CD4-positive, alpha-beta memory T cell (primary cell): ENCODE measurements at regions of chr3 and their contacts with region 1.

Region 1: GRCh38 chr3:48446425-48447193 is at the start of gene ATRIP:
- DNase-seq: peak; percentile 79 to 86 (median 82)
- H3K4me3 ChIP-seq: peak within 1 kb of the TSS; percentile 76 to 84
- H3K4me3 Mint-ChIP-seq: peak within 1 kb of the TSS; percentile 83 to 96 (median 90)
- H3K27ac ChIP-seq: peak within 1 kb of the TSS; percentile 68
- H3K27ac Mint-ChIP-seq: peak within 1 kb of the TSS; percentile 91 to 97 (median 96)
- H3K4me1 ChIP-seq: peaks cover 30% of the 10 kb centered on the region
- H3K4me1 Mint-ChIP-seq: peaks cover 22 to 49% (median 37%) of the 10 kb centered on the region in 4 donors
- H3K27me3 ChIP-seq: no peaks in the 10 kb centered on the region
- H3K27me3 Mint-ChIP-seq: no peaks in the 10 kb centered on the region
- total RNA-seq, gene ATRIP: 14.9 to 15.2 TPM

Region 2: DNA sequence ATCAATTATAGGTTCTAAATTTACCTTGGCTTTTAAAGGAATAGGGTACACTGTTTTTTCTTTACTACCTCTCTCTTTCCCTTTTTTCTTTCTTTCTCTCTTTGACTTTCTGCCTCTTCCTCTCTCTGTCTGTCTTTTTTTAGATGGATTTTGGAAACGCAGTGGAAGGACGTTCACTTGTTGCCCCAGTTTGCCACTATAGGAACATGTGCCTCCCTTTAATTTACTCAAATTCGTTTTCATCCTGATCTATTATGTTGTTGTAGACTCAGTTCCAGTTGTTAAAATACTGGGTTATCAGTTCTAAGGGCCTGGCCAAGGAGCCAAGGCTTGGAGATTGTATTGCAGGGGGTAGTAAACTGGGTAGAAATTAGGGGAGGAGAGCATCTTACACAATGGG is 112.0 kb before region 1 on chr3:
- CTCF ChIA-PET with region 1: no interaction called
- POLR2A ChIA-PET with region 1: no interaction called
- intact Hi-C with region 1: no loop called
- DNase-seq: no peak
- H3K4me3 ChIP-seq: no peak overlapping the region
- H3K4me3 Mint-ChIP-seq: no peak overlapping the region
- H3K27ac ChIP-seq: no peak overlapping the region
- H3K27ac Mint-ChIP-seq: no peak overlapping the region
- H3K4me1 ChIP-seq: no peaks in the 10 kb centered on the region
- H3K4me1 Mint-ChIP-seq: peaks cover 0 to 2% (median 0%) of the 10 kb centered on the region in 4 donors
- H3K27me3 ChIP-seq: no peaks in the 10 kb centered on the region
- H3K27me3 Mint-ChIP-seq: peaks cover 22 to 37% of the 10 kb centered on the region in 2 donors

Region 3: GRCh38 chr3:48459773-48460516 is 13.3 kb after region 1 on chr3:
- CTCF ChIA-PET with region 1: interaction called, 3 read pairs
- POLR2A ChIA-PET with region 1: interaction called, 51 read pairs
- intact Hi-C with region 1: no loop called
- DNase-seq: no peak
- H3K4me3 ChIP-seq: no peak overlapping the region
- H3K4me3 Mint-ChIP-seq: no peak overlapping the region
- H3K27ac ChIP-seq: no peak overlapping the region
- H3K27ac Mint-ChIP-seq: peak overlapping the region in 1 of 7 donors; percentile 60
- H3K4me1 ChIP-seq: no peaks in the 10 kb centered on the region
- H3K4me1 Mint-ChIP-seq: peaks cover 0 to 10% (median 6%) of the 10 kb centered on the region in 4 donors
- H3K27me3 ChIP-seq: no peaks in the 10 kb centered on the region
- H3K27me3 Mint-ChIP-seq: no peaks in the 10 kb centered on the region

Region 4: DNA sequence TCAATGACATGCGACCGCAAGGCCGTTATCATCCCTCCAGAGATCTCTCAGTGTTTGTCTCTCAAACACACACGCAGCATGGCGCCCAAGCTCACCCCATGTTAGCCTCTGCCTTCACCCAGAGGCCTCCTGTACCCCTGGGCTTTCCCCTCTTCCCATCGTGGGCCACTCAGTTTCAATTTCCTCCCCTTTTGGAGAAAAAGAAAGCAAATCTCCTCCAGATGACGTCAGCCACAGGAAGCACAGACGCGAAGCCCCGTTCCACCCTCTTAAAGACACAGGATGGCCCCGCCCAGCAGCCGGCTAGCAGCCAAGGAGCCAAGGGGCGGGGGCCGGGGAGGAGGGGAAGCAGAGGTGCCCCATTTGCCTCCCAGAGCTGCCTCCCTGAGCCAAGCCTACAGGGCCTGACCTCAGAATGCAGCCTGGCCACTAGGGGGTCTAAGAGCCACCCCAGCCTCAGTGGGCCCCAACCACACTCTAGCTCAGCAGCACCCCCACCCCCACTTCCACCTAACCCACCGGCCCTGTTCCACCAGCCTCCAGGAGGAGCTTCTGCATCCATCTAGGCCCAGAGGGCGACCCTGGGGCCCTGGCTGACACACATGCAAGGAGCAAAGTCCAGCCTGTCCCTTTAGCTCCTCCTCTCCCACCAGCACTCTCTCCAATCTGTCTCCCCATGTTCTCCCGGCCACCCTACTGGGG is 26.5 kb after region 1 on chr3:
- CTCF ChIA-PET with region 1: interaction called, 4 read pairs
- POLR2A ChIA-PET with region 1: interaction called, 56 read pairs
- intact Hi-C with region 1: no loop called
- DNase-seq: peak; percentile 93 to 98 (median 96)
- H3K4me3 ChIP-seq: peak overlapping the region; percentile 93 to 95
- H3K4me3 Mint-ChIP-seq: peak overlapping the region; percentile 84 to 99 (median 95)
- H3K27ac ChIP-seq: peak overlapping the region; percentile 97
- H3K27ac Mint-ChIP-seq: peak overlapping the region; percentile 92 to 100 (median 99)
- H3K4me1 ChIP-seq: peaks cover 86% of the 10 kb centered on the region
- H3K4me1 Mint-ChIP-seq: peaks cover 34 to 75% (median 54%) of the 10 kb centered on the region in 4 donors
- H3K27me3 ChIP-seq: no peaks in the 10 kb centered on the region
- H3K27me3 Mint-ChIP-seq: no peaks in the 10 kb centered on the region

Region 5: DNA sequence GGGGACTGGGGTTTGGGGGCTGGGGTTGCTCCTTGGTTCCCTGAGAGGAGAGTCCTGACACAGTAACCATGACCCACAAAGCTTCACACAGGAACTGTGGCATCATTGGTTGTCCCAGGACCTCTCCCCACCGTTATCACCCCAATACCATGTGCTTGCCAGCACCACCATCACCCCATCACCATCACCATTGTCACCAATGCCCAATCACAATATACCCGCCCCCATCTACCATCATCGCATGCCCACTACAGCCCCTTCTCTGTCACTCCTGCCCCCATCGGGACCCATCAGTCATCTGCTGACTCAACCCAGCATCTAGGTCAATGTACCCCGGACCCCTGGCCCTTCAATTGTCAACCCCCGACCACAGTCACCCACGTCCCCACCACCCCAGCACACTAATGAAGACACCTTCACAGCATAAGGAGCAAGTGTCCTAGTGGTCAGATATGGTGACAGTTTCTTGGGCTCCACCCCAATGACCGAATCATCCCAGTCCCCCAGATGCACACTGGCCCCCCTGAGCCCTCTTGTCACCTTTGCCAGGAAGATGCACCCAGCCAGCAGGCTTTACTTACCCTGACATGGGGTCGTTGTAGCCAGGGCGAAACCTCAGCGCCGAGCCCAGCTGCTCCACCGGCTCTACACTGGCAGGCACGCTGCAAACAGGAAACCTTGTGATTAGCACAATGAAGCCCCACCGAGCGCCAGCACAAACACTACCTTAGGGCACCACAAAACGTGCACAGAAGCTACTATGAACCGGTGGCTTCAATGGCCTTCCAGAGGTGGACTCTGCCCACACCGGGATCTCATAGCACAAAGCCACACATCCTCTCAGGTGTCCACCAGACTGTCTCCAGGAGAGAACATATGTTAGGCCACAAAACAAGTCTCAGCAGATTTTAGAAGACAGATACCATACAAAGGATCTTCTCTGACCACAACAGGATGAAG is 32.3 kb after region 1 on chr3:
- CTCF ChIA-PET with region 1: interaction called, 4 read pairs
- POLR2A ChIA-PET with region 1: interaction called, 56 read pairs
- intact Hi-C with region 1: loop called (anchors 1 kb)
- DNase-seq: peak; percentile 81 to 89 (median 85)
- H3K4me3 ChIP-seq: peak overlapping the region; percentile 71 to 80
- H3K4me3 Mint-ChIP-seq: peak overlapping the region; percentile 89 to 97 (median 90)
- H3K27ac ChIP-seq: peak overlapping the region; percentile 59
- H3K27ac Mint-ChIP-seq: peak overlapping the region; percentile 89 to 99 (median 98)
- H3K4me1 ChIP-seq: peaks cover 58% of the 10 kb centered on the region
- H3K4me1 Mint-ChIP-seq: peaks cover 31 to 59% (median 40%) of the 10 kb centered on the region in 4 donors
- H3K27me3 ChIP-seq: no peaks in the 10 kb centered on the region
- H3K27me3 Mint-ChIP-seq: no peaks in the 10 kb centered on the region